ENCODE measurements at regions of chr5 and their contacts with region 1.

Region 1: GRCh38 chr5:91419571-91420537 is 36.7 kb upstream of the ARRDC3 start:
- DNase-seq: peak; percentile 77
- H3K4me3 ChIP-seq: no peak overlapping the region
- H3K27ac ChIP-seq: no peak overlapping the region
- H3K4me1 ChIP-seq: no peaks in the 10 kb centered on the region
- H3K27me3 ChIP-seq: no peaks in the 10 kb centered on the region
- CTCF ChIP-seq: peak in 1 of 2 donors; percentile 40
- POLR2A ChIP-seq: no peak

Region 2: DNA sequence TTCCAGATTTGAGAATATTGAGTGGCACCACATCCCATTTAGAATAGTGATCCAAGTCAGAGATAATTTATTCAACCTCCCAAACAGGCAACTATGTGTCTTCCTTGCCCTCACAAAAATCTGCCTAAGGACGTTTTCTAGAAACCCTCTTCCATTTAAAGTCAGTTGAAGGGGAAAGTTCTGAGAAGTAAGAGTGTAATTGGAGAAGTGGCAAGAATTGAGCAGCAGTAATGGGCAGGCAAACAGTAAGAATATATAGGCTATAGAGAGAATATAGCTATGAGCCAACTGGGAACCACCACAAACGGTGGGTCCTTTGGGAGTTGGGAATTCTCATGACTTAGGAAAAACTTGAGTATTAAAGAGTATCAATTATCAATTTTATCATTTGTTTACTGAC is 979.2 kb before region 1 on chr5:
- CTCF ChIA-PET with region 1: interaction called, 10 read pairs
- POLR2A ChIA-PET with region 1: no interaction called
- dilution Hi-C with region 1: no loop called
- intact Hi-C with region 1: no loop called
- DNase-seq: no peak
- H3K4me3 ChIP-seq: no peak overlapping the region
- H3K27ac ChIP-seq: no peak overlapping the region
- H3K4me1 ChIP-seq: no peaks in the 10 kb centered on the region
- H3K27me3 ChIP-seq: peaks cover 0 to 5% of the 10 kb centered on the region in 2 experiments
- CTCF ChIP-seq: no peak
- POLR2A ChIP-seq: no peak

Region 3: GRCh38 chr5:90793183-90793582 is 626.7 kb before region 1 on chr5:
- CTCF ChIA-PET with region 1: interaction called, 57 read pairs
- POLR2A ChIA-PET with region 1: no interaction called
- dilution Hi-C with region 1: no loop called
- intact Hi-C with region 1: no loop called
- DNase-seq: peak; percentile 9
- H3K4me3 ChIP-seq: no peak overlapping the region
- H3K27ac ChIP-seq: no peak overlapping the region
- H3K4me1 ChIP-seq: no peaks in the 10 kb centered on the region
- H3K27me3 ChIP-seq: peaks cover 0 to 2% of the 10 kb centered on the region in 2 experiments
- CTCF ChIP-seq: peak in 1 of 2 donors; percentile 11
- POLR2A ChIP-seq: no peak

Region 4: GRCh38 chr5:90873033-90873517 is 546.8 kb before region 1 on chr5:
- CTCF ChIA-PET with region 1: interaction called, 287 read pairs
- POLR2A ChIA-PET with region 1: no interaction called
- dilution Hi-C with region 1: no loop called
- intact Hi-C with region 1: no loop called
- DNase-seq: no peak
- H3K4me3 ChIP-seq: no peak overlapping the region
- H3K27ac ChIP-seq: no peak overlapping the region
- H3K4me1 ChIP-seq: peaks cover 3% of the 10 kb centered on the region
- H3K27me3 ChIP-seq: no peaks in the 10 kb centered on the region
- CTCF ChIP-seq: no peak
- POLR2A ChIP-seq: no peak

Region 5: DNA sequence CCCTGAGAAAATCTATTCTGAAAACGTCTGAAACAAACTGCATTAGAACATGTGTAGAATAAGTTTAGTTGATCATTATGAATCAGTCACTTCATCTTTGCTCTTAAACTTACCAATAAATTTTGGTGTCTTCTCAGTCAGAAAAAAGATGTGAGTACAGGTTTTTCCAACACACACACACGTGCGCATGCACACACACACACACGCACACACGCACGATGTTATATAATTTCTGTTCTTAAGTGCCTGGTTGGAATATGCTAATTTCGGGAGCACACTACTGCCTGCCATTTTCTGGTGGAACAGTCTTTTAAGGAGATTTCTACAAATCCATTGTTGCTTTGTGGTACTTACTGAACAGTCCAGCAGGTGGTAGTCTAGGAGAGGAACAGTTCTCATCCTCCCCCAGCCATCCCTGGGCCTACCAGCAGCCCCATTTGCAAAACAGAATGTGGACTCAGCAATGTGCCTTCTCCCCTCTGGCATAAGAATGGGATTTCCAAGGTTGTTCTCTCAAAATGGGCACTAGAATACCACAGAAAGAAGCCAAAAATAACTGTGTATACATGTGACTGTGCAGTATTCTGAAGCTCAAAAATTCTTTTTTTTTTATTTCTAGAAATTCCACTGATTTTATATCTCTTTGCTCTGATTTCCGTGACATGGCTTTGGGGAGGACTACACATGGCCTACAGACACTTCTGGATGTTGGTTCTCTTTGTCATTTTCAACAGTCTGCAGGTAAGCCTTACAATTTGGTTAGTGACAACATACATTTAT is 318.1 kb before region 1 on chr5:
- CTCF ChIA-PET with region 1: interaction called, 34 read pairs
- POLR2A ChIA-PET with region 1: no interaction called
- dilution Hi-C with region 1: no loop called
- intact Hi-C with region 1: loop called (anchors 1 kb)
- DNase-seq: peak; percentile 85
- H3K4me3 ChIP-seq: no peak overlapping the region
- H3K27ac ChIP-seq: no peak overlapping the region
- H3K4me1 ChIP-seq: no peaks in the 10 kb centered on the region
- H3K27me3 ChIP-seq: no peaks in the 10 kb centered on the region
- CTCF ChIP-seq: peak; percentile 67 to 70
- POLR2A ChIP-seq: no peak

Region 6: GRCh38 chr5:91434348-91434747 is 14.5 kb after region 1 on chr5:
- CTCF ChIA-PET with region 1: interaction called, 10 read pairs
- POLR2A ChIA-PET with region 1: no interaction called
- dilution Hi-C with region 1: no loop called
- intact Hi-C with region 1: no loop called
- DNase-seq: no peak
- H3K4me3 ChIP-seq: no peak overlapping the region
- H3K27ac ChIP-seq: no peak overlapping the region
- H3K4me1 ChIP-seq: no peaks in the 10 kb centered on the region
- H3K27me3 ChIP-seq: no peaks in the 10 kb centered on the region
- CTCF ChIP-seq: no peak
- POLR2A ChIP-seq: no peak

Region 7: DNA sequence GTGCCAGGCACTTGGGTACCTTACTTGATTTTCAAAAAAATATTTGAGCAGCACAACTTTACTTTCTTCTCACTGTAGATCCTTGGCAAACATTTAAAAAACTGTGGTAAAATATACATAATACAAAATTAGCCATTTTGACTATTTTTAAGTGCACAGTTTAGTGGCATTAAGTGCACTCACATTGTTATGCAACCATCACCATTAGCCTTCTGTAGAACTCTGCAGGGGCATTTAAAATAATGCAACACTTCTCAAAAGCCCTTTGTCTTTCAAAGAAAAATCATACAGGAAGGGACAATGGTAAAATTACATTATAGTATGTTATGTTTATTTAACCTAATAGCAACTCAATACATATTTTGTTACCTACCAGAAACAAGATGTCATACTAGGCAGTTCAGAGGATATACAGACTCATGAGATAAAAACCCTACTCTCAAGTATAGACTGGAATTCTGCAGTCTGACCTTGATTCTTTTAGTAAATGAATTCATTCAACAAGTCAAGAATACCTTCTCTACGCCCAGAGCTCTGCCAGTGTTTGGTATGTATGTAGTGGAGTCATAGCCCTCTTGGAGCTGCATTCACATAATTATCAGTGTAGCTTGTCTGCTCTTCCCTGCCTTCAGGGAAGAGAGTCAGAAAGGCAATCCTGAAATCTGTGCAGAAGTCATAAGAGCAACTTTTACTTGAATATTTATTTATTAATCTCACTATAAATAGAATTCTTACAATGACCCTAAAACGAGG is 37.2 kb after region 1 on chr5:
- CTCF ChIA-PET with region 1: no interaction called
- POLR2A ChIA-PET with region 1: no interaction called
- dilution Hi-C with region 1: no loop called
- intact Hi-C with region 1: no loop called
- DNase-seq: no peak
- H3K4me3 ChIP-seq: no peak overlapping the region
- H3K27ac ChIP-seq: no peak overlapping the region
- H3K4me1 ChIP-seq: no peaks in the 10 kb centered on the region
- H3K27me3 ChIP-seq: no peaks in the 10 kb centered on the region
- CTCF ChIP-seq: no peak
- POLR2A ChIP-seq: no peak